Body of pancreas (tissue), 4 donors: ENCODE measurements at regions of chr2 and their contacts with region 1.

Region 1: GRCh38 chr2:192162392-192163042 is 32.2 kb downstream of the TMEFF2 start:
- DNase-seq: peak; percentile 66 to 74 (median 68)
- ATAC-seq: peak; percentile 78
- H3K4me3 ChIP-seq: no peak overlapping the region
- H3K27ac ChIP-seq: no peak overlapping the region
- H3K4me1 ChIP-seq: no peaks in the 10 kb centered on the region
- H3K27me3 ChIP-seq: no peaks in the 10 kb centered on the region
- CTCF ChIP-seq: peak; percentile 57 to 97 (median 89)
- POLR2A ChIP-seq: no peak

Region 2: GRCh38 chr2:191501561-191502168 is 660.9 kb before region 1 on chr2:
- intact Hi-C with region 1: no loop called
- DNase-seq: no peak
- ATAC-seq: peak; percentile 68
- H3K4me3 ChIP-seq: no peak overlapping the region
- H3K27ac ChIP-seq: peak overlapping the region in 3 of 4 donors; percentile 21 to 56 (median 37)
- H3K4me1 ChIP-seq: peaks cover 39% of the 10 kb centered on the region
- H3K27me3 ChIP-seq: no peaks in the 10 kb centered on the region
- CTCF ChIP-seq: peak; percentile 42 to 88 (median 82)
- POLR2A ChIP-seq: no peak

Region 3: GRCh38 chr2:191555092-191555742 is 607.3 kb before region 1 on chr2:
- intact Hi-C with region 1: loop called (anchors 10 kb)
- DNase-seq: peak; percentile 86 to 90 (median 88)
- ATAC-seq: peak; percentile 93
- H3K4me3 ChIP-seq: no peak overlapping the region
- H3K27ac ChIP-seq: no peak overlapping the region
- H3K4me1 ChIP-seq: peaks cover 7% of the 10 kb centered on the region
- H3K27me3 ChIP-seq: no peaks in the 10 kb centered on the region
- CTCF ChIP-seq: peak; percentile 64 to 84 (median 78)
- POLR2A ChIP-seq: no peak

Region 4: GRCh38 chr2:191811807-191812602 is 350.5 kb before region 1 on chr2:
- intact Hi-C with region 1: loop called (anchors 5 kb)
- DNase-seq: peak; percentile 41 to 63 (median 59)
- ATAC-seq: peak; percentile 72
- H3K4me3 ChIP-seq: no peak overlapping the region
- H3K27ac ChIP-seq: no peak overlapping the region
- H3K4me1 ChIP-seq: no peaks in the 10 kb centered on the region
- H3K27me3 ChIP-seq: no peaks in the 10 kb centered on the region
- CTCF ChIP-seq: peak; percentile 44 to 87 (median 75)
- POLR2A ChIP-seq: no peak

Region 5: GRCh38 chr2:192099742-192100141 is 62.8 kb before region 1 on chr2:
- intact Hi-C with region 1: loop called (anchors 10 kb)
- DNase-seq: no peak
- ATAC-seq: no peak
- H3K4me3 ChIP-seq: no peak overlapping the region
- H3K27ac ChIP-seq: no peak overlapping the region
- H3K4me1 ChIP-seq: no peaks in the 10 kb centered on the region
- H3K27me3 ChIP-seq: no peaks in the 10 kb centered on the region
- CTCF ChIP-seq: no peak
- POLR2A ChIP-seq: no peak

Region 6: DNA sequence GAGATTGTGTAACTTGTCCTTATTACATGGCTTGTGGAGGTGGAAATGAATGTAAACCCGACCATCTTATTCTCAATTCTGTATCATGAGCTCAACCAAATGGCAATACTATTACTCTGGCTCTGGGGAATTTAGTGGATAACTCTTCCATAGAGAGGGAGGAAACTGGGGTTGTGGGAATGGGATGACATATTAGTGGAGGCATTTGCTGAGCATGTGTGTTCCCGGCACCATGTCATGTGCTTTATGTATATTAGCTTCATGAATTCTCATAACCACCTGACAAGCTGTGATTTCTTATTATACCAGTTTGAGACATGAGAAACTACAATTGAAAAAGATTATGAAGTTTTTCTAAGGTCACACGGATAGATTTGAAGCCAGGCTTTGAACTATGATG is 145.0 kb after region 1 on chr2:
- intact Hi-C with region 1: no loop called
- DNase-seq: no peak
- ATAC-seq: no peak
- H3K4me3 ChIP-seq: no peak overlapping the region
- H3K27ac ChIP-seq: no peak overlapping the region
- H3K4me1 ChIP-seq: no peaks in the 10 kb centered on the region
- H3K27me3 ChIP-seq: no peaks in the 10 kb centered on the region
- CTCF ChIP-seq: no peak
- POLR2A ChIP-seq: no peak

Region 7: DNA sequence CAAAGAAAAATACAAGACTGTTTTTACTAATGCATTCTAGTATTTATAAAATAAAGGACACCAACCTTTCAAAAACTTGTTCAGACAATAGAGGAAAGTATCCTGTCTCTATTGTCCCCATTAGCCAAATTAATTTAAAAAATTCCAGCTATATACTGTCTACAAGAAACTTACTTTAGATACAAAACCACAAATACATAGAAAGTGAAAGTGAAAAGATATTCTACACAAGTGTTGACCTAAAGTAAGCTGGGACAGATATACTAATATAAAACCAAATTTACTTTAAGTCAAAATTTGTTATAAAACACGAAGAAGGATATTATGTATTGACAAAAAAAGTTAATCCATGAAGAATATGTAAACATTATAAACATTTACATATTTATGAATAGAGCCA is 925.5 kb after region 1 on chr2:
- intact Hi-C with region 1: no loop called
- DNase-seq: no peak
- ATAC-seq: no peak
- H3K4me3 ChIP-seq: no peak overlapping the region
- H3K27ac ChIP-seq: no peak overlapping the region
- H3K4me1 ChIP-seq: no peaks in the 10 kb centered on the region
- H3K27me3 ChIP-seq: no peaks in the 10 kb centered on the region
- CTCF ChIP-seq: no peak
- POLR2A ChIP-seq: no peak